SK-N-SH (cell line): ENCODE measurements at regions of chr10 and their contacts with region 1.

Region 1: DNA sequence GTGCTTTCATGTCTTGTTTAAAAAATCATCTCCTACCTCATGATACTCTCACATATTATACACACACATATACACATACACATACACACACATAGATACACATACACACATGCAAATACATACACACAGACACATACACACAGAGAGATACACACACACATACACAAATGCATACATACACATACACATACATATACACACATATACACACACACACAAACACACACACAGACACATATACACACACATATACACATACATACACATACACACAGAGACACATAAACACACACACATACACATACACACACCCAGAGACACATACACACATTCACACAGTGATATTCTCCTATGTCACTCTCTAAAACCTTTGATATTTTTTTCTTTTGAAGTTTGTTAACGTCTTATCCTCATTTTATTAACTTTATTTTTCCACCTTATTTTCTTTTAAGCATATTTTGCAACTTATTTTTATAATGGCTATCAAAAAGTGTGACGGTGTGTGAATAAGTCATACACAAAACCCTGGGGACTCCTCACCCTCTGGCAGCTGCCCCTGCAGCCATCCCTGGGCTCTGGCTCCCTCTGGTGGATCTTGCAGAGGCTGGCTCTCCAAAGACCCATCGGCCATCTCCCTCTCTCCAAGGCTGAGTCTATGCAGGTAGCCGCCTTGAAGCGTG is 3.9 kb upstream of the C10orf120 start:
- DNase-seq: peak; percentile 79
- H3K4me3 ChIP-seq: peak overlapping the region in 1 of 2 experiments; percentile 45; a peak in 1 of 4 replicates
- H3K27ac ChIP-seq: no peak overlapping the region
- H3K4me1 ChIP-seq: no peaks in the 10 kb centered on the region
- H3K27me3 ChIP-seq: no peaks in the 10 kb centered on the region
- CTCF ChIP-seq: peak; percentile 80
- EP300 ChIP-seq: no peak
- RAD21 ChIP-seq: peak; percentile 92

Region 2: GRCh38 chr10:122674781-122675180 is 28.8 kb before region 1 on chr10:
- CTCF ChIA-PET with region 1: interaction called, 16 read pairs
- POLR2A ChIA-PET with region 1: no interaction called
- DNase-seq: no peak
- H3K4me3 ChIP-seq: no peak overlapping the region
- H3K27ac ChIP-seq: no peak overlapping the region
- H3K4me1 ChIP-seq: peaks cover 0 to 4% of the 10 kb centered on the region in 2 experiments; a peak in 1 of 4 replicates
- H3K27me3 ChIP-seq: no peaks in the 10 kb centered on the region; the same call in 1 of the 2 replicates
- CTCF ChIP-seq: no peak
- EP300 ChIP-seq: no peak
- RAD21 ChIP-seq: no peak